H1 (cell line): ENCODE measurements at regions of chr1 and their contacts with region 1.

Region 1: DNA sequence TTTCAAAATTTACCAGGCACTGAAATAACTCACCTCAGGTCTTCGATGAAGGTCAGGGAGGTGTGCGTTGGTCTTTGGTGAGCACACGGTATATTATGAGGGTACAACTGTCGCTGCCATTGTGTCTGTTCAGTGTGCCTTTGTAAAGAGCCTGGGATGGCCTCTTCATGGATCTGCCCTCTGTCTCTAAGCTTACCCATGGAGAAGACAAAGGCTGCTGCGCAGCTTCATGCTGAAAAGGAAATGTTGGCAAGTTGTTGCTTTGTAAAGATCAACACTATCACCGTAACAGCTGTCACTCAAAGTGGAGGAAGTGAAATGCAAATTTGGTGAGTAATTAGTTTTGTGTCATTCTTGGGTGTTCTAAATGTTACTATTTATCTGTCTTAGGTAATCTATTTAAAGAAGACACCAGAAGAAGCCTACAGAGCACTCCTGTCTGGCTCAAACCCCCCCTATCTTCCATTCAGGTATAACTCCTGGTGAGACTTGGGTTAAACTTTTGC is 71.6 kb downstream of the CDC14A start:
- DNase-seq: no peak
- H3K4me3 ChIP-seq: no peak overlapping the region
- H3K27ac ChIP-seq: no peak overlapping the region
- H3K4me1 ChIP-seq: peaks cover 0 to 5% (median 3%) of the 10 kb centered on the region in 4 experiments; a peak in 4 of 7 replicates
- H3K27me3 ChIP-seq: no peaks in the 10 kb centered on the region
- CTCF ChIP-seq: no peak
- EP300 ChIP-seq: no peak
- POLR2A ChIP-seq: no peak
- RAD21 ChIP-seq: no peak

Region 2: GRCh38 chr1:100404821-100405220 is 19.1 kb before region 1 on chr1:
- CTCF ChIA-PET with region 1: interaction called, 26 read pairs
- POLR2A ChIA-PET with region 1: no interaction called
- DNase-seq: no peak
- H3K4me3 ChIP-seq: no peak overlapping the region
- H3K27ac ChIP-seq: no peak overlapping the region
- H3K4me1 ChIP-seq: peaks cover 0 to 3% (median 0%) of the 10 kb centered on the region in 4 experiments; a peak in 1 of 7 replicates
- H3K27me3 ChIP-seq: no peaks in the 10 kb centered on the region
- CTCF ChIP-seq: no peak
- EP300 ChIP-seq: no peak
- POLR2A ChIP-seq: no peak
- RAD21 ChIP-seq: no peak

Region 3: GRCh38 chr1:100413035-100413434 is 10.8 kb before region 1 on chr1:
- CTCF ChIA-PET with region 1: interaction called, 26 read pairs
- POLR2A ChIA-PET with region 1: interaction called, 3 read pairs
- DNase-seq: no peak
- H3K4me3 ChIP-seq: no peak overlapping the region
- H3K27ac ChIP-seq: no peak overlapping the region
- H3K4me1 ChIP-seq: peaks cover 3 to 8% (median 3%) of the 10 kb centered on the region in 4 experiments; a peak in 6 of 7 replicates
- H3K27me3 ChIP-seq: no peaks in the 10 kb centered on the region
- CTCF ChIP-seq: no peak
- EP300 ChIP-seq: no peak
- POLR2A ChIP-seq: no peak
- RAD21 ChIP-seq: no peak

Region 4: GRCh38 chr1:100502052-100502783 is 78.3 kb after region 1 on chr1:
- CTCF ChIA-PET with region 1: no interaction called
- POLR2A ChIA-PET with region 1: no interaction called
- DNase-seq: no peak
- H3K4me3 ChIP-seq: no peak overlapping the region
- H3K27ac ChIP-seq: no peak overlapping the region
- H3K4me1 ChIP-seq: no peaks in the 10 kb centered on the region
- H3K27me3 ChIP-seq: peaks cover 0 to 2% (median 0%) of the 10 kb centered on the region in 4 experiments; a peak in 1 of 7 replicates
- CTCF ChIP-seq: no peak
- EP300 ChIP-seq: no peak
- POLR2A ChIP-seq: no peak
- RAD21 ChIP-seq: no peak